Naive thymus-derived CD4-positive, alpha-beta T cell (primary cell): ENCODE measurements at regions of chr2 and their contacts with region 1.

Region 1: GRCh38 chr2:68196120-68196716 is 38.5 kb downstream of the PNO1 start:
- DNase-seq: peak in 6 of 9 donors; percentile 21 to 65 (median 57)
- ATAC-seq: peak; percentile 74
- H3K4me3 ChIP-seq: no peak overlapping the region
- H3K4me3 Mint-ChIP-seq: no peak overlapping the region
- H3K27ac ChIP-seq: no peak overlapping the region
- H3K27ac Mint-ChIP-seq: peak overlapping the region in 5 of 9 donors; percentile 6 to 81 (median 72)
- H3K4me1 ChIP-seq: no peaks in the 10 kb centered on the region
- H3K4me1 Mint-ChIP-seq: peaks cover 35 to 92% (median 71%) of the 10 kb centered on the region in 7 donors
- H3K27me3 ChIP-seq: no peaks in the 10 kb centered on the region
- H3K27me3 Mint-ChIP-seq: no peaks in the 10 kb centered on the region

Region 2: DNA sequence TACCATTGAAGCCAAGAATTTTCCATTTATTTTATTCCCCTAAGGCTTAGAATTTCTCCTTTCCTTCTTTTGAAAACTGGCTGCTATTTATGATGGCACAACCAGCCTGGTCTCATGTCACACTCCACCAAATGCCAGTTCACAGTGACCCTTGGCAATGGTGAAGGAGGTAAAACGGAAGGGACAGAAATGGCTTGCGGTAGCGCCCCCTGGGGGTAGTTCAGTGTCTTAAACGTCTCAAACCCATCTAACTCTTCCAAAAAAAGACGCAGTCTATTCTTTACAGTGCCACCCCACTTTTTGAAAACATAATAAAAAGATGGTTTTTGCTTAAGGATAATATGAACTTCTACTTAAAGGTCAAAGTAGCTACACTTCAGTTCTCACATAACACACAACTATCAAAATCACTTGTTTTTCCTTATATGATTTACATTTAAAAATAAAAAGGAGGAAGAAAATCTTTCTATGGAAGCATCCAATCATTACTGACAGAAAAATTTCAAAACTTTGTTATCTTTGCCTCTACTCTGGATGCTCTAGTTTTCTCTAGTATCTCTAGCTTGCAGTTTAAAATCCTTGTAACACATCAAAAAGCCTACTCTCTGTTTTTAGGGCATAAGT is 10.6 kb before region 1 on chr2:
- CTCF ChIA-PET with region 1: interaction called, 5 read pairs
- POLR2A ChIA-PET with region 1: no interaction called
- intact Hi-C with region 1: loop called in 1 of 2 experiments (anchors 1 kb)
- DNase-seq: peak; percentile 28 to 55 (median 47)
- ATAC-seq: peak; percentile 87
- H3K4me3 ChIP-seq: no peak overlapping the region
- H3K4me3 Mint-ChIP-seq: no peak overlapping the region
- H3K27ac ChIP-seq: no peak overlapping the region
- H3K27ac Mint-ChIP-seq: peak overlapping the region in 7 of 9 donors; percentile 51 to 87 (median 73)
- H3K4me1 ChIP-seq: no peaks in the 10 kb centered on the region
- H3K4me1 Mint-ChIP-seq: peaks cover 22 to 66% (median 58%) of the 10 kb centered on the region in 7 donors
- H3K27me3 ChIP-seq: no peaks in the 10 kb centered on the region
- H3K27me3 Mint-ChIP-seq: no peaks in the 10 kb centered on the region

Region 3: DNA sequence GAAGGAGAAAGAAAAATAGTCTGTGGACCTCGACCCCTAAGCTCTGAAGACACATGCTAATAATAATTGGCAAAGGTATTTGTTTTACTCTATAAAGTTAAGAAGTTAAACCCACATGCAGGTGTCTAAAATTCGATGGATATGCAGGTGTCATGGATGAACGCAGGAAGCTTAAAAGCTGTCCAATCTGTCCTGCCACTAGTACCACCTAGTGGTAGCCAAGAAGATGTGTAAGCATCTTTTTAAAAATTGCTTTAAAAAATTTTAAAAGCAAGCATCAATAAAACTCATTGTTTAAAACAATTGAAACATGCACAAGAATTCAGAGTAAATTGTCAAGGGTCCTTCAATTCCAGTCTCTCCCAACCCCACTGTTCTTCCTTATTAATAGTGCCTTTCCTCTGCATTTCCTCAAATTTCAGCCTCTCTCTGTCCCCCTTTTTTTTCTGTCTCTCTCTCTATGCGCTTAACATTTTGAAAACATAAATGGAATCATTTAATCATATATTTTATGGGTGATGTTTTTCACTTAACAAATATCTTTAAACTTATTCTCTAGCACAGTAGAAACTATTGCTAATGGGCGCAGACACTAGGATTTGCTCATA is 86.7 kb after region 1 on chr2:
- CTCF ChIA-PET with region 1: interaction called, 28 read pairs
- POLR2A ChIA-PET with region 1: no interaction called
- intact Hi-C with region 1: loop called (anchors 1 kb)
- DNase-seq: peak in 7 of 9 donors; percentile 28 to 54 (median 43)
- ATAC-seq: peak; percentile 81
- H3K4me3 ChIP-seq: no peak overlapping the region
- H3K4me3 Mint-ChIP-seq: no peak overlapping the region
- H3K27ac ChIP-seq: no peak overlapping the region
- H3K27ac Mint-ChIP-seq: no peak overlapping the region
- H3K4me1 ChIP-seq: no peaks in the 10 kb centered on the region
- H3K4me1 Mint-ChIP-seq: peaks cover 0 to 4% (median 0%) of the 10 kb centered on the region in 7 donors
- H3K27me3 ChIP-seq: no peaks in the 10 kb centered on the region
- H3K27me3 Mint-ChIP-seq: peaks cover 5 to 46% (median 16%) of the 10 kb centered on the region in 5 donors